Heart left ventricle (tissue), 16 donors: ENCODE measurements at regions of chr10 and their contacts with region 1.

Region 1: DNA sequence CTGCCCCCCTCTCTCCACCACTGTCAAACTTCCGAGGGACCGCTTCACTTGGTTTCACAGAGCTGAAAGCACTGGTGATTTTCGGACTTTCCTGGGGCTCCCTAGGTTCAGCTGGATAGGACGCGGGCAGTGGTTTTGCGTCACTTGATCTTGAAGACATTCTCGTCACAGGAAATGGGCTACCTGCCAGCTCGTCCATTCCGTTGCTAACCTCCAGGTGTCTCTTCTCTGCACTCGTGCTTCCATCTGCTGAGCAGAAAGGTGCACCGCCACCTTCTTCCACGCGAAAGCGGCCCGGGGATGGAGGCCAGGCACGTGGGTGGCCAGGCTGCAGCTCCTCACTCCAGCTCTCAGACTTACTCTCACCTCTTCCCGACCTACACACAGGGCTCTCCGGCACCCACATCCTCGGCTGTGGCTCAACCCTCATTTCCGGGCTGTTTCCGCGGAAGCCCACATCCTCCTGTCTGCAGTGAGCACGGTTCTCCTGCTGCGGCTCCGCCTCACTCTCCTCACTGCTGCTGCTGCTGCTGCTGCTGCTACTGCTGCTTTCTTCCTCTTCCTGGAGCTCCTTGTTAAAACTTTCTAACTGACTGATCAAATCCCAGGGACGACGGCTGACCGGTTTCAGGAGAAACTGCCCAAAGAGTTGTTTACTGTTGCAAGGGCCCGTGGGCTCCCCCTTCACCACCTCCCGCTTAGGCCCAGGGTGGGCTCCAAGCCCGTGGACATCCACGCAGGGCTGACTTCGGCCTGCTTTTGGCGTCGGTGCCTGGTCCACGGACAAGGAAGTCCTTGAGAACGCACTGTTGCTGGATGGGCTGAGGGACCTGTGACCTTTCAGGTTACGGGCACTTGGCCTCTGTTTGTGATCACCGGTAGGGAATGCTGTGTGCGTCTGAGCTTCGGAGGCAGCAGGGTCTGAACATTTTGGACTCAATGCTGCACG is 32.1 kb downstream of the JCAD start:
- DNase-seq: peak; percentile 58 to 80 (median 67)
- ATAC-seq: peak; percentile 27 to 79 (median 61)
- H3K4me3 ChIP-seq: peak overlapping the region in 3 of 12 donors; percentile 6 to 35 (median 10)
- H3K27ac ChIP-seq: peak overlapping the region; percentile 56 to 88 (median 77)
- H3K4me1 ChIP-seq: peaks cover 5 to 49% (median 41%) of the 10 kb centered on the region in 12 donors
- H3K27me3 ChIP-seq: peaks cover 0 to 24% (median 0%) of the 10 kb centered on the region in 9 donors
- CTCF ChIP-seq: peak in 7 of 12 donors; percentile 7 to 28 (median 16)
- POLR2A ChIP-seq: no peak

Region 2: DNA sequence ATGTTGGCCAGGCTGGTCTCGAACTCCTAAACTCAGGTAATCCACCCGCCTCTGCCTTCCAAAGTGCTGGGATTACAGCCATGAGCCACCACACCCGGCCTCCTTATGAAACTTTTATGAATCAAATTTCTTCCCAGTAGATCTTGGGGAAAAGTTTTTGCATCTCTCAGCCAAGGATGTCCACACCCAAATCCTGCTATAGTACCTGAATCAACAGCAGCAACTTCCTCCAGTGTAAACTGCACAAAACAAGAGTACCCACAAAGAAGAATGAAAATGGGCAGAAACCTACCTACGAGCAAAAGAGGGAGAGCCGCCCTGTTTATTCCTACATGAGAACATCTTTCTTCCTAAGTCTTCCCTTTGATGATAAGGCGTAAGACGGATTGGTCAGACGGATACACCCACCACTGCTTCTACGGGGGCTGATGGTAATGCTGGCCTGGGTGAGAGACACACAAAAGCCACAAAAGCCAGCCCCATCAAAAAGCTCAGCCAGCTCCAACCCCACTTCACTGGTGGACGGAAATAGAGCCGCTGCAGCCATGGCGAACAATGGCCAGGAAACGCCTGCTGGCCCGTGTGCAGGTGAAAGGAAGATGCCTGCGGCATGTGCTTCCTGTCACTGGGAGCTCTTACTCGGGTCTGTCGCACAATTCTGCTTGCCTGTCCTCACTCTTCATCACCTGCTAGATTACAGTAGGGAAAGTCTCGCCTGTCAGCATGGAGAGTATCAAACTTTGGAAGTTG is 21.6 kb after region 1 on chr10:
- intact Hi-C with region 1: loop called in 1 of 10 experiments (anchors 1 kb)
- DNase-seq: peak in 3 of 5 donors; percentile 44 to 61 (median 60)
- ATAC-seq: peak; percentile 55 to 86 (median 66)
- H3K4me3 ChIP-seq: no peak overlapping the region
- H3K27ac ChIP-seq: peak overlapping the region; percentile 22 to 87 (median 72)
- H3K4me1 ChIP-seq: peaks cover 0 to 62% (median 20%) of the 10 kb centered on the region in 12 donors
- H3K27me3 ChIP-seq: peaks cover 0 to 31% (median 0%) of the 10 kb centered on the region in 9 donors
- CTCF ChIP-seq: no peak
- POLR2A ChIP-seq: no peak